Heart left ventricle (tissue), 16 donors: ENCODE measurements at regions of chr20 and their contacts with region 1.

Region 1: DNA sequence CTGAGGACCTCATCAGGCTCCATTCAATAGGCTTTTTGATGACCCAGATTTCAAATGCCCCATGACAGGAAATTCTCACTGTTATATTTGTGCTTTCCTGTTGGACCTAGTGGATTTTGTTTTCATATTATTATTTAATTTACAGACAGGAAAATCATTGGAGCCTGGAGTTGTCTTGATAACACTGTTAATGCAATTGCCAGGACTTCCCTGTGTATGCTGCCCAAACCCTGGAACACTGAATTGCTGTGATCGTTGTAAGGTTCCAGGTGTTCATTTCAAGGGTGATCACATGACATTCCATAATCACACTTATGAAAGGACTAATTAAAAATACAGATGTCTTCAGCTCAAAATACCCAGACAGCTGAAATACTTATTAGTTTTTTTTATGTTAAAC is 783.2 kb downstream of the DHX35 start:
- DNase-seq: peak in 2 of 5 donors; percentile 14 to 27
- ATAC-seq: peak; percentile 63 to 99 (median 72)
- H3K4me3 ChIP-seq: no peak overlapping the region
- H3K27ac ChIP-seq: no peak overlapping the region
- H3K4me1 ChIP-seq: peaks cover 0 to 12% (median 0%) of the 10 kb centered on the region in 12 donors
- H3K27me3 ChIP-seq: peaks cover 0 to 8% (median 0%) of the 10 kb centered on the region in 9 donors
- CTCF ChIP-seq: no peak
- POLR2A ChIP-seq: no peak

Region 2: GRCh38 chr20:39691151-39691862 is 54.1 kb before region 1 on chr20:
- intact Hi-C with region 1: no loop called
- DNase-seq: no peak
- ATAC-seq: no peak
- H3K4me3 ChIP-seq: no peak overlapping the region
- H3K27ac ChIP-seq: no peak overlapping the region
- H3K4me1 ChIP-seq: peaks cover 0 to 16% (median 0%) of the 10 kb centered on the region in 12 donors
- H3K27me3 ChIP-seq: no peaks in the 10 kb centered on the region
- CTCF ChIP-seq: no peak
- POLR2A ChIP-seq: no peak

Region 3: GRCh38 chr20:39795401-39796272 is 50.3 kb after region 1 on chr20:
- intact Hi-C with region 1: loop called in 1 of 10 experiments (anchors 10 kb)
- DNase-seq: no peak
- ATAC-seq: peak in 1 of 4 donors; percentile 59
- H3K4me3 ChIP-seq: no peak overlapping the region
- H3K27ac ChIP-seq: peak overlapping the region in 1 of 12 donors; percentile 9
- H3K4me1 ChIP-seq: peaks cover 0 to 10% (median 0%) of the 10 kb centered on the region in 12 donors
- H3K27me3 ChIP-seq: no peaks in the 10 kb centered on the region
- CTCF ChIP-seq: no peak
- POLR2A ChIP-seq: no peak